GM12878 (cell line): ENCODE measurements at regions of chr14 and their contacts with region 1.

Region 1: DNA sequence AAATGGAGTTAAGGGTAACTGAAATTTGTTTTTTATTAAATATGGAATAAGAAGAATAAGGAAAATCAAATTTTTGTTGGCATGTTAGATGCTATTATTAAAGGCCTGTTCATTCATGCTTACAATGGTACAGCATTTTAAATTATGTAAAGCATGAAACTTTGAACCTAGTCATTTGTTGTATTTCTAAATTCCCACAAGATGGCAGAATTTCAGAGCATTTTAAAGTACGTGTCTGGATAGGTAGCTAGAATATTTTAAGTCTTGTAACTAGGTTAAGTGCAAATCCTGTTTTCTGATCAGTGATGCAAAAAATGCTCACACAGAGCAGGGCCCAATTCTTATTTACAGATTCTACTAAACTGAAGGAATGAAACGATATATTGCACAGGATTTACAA is 585.6 kb upstream of the MIS18BP1 start:
- DNase-seq: peak; percentile 11
- ATAC-seq: peak; percentile 56
- H3K4me3 ChIP-seq: no peak overlapping the region
- H3K27ac ChIP-seq: no peak overlapping the region
- H3K4me1 ChIP-seq: no peaks in the 10 kb centered on the region
- H3K27me3 ChIP-seq: no peaks in the 10 kb centered on the region
- CTCF ChIP-seq: peak in 2 of 3 experiments; percentile 8 to 31; a peak in 1 of 6 replicates
- EP300 ChIP-seq: no peak
- POLR2A ChIP-seq: no peak
- RAD21 ChIP-seq: peak; percentile 68

Region 2: GRCh38 chr14:45426670-45427282 is 411.8 kb before region 1 on chr14:
- CTCF ChIA-PET with region 1: interaction called, 4 read pairs
- POLR2A ChIA-PET with region 1: no interaction called
- RAD21 ChIA-PET with region 1: no interaction called
- SMC1A ChIA-PET with region 1: no interaction called
- in situ Hi-C with region 1: no loop called
- intact Hi-C with region 1: loop called (anchors 10 kb)
- DNase-seq: peak; percentile 4
- ATAC-seq: peak; percentile 77
- H3K4me3 ChIP-seq: no peak overlapping the region
- H3K27ac ChIP-seq: no peak overlapping the region
- H3K4me1 ChIP-seq: no peaks in the 10 kb centered on the region
- H3K27me3 ChIP-seq: no peaks in the 10 kb centered on the region
- CTCF ChIP-seq: peak; percentile 46 to 60 (median 52); a peak in 5 of 6 replicates
- EP300 ChIP-seq: no peak
- POLR2A ChIP-seq: no peak
- RAD21 ChIP-seq: peak; percentile 76

Region 3: DNA sequence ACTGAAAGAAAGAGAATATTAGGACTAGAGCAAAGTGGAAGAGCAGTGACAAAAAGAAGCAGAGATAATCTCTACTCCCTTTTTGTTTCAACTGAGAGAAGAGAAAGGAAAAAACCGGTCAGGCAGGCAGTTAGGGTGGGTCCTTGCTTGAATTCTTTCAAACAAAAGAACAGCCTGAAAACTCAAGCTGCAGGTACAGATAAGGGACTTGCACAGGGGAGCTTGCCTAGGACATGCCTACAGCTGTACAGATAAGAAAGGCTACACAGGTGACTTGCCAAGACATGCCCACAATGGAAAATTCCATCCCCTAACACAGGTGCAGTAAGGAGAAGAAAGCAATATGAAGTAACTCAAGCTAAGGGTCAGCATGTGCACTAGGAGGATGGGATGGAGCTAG is 53.4 kb before region 1 on chr14:
- CTCF ChIA-PET with region 1: no interaction called
- POLR2A ChIA-PET with region 1: no interaction called
- RAD21 ChIA-PET with region 1: no interaction called
- SMC1A ChIA-PET with region 1: no interaction called
- in situ Hi-C with region 1: no loop called
- intact Hi-C with region 1: no loop called
- DNase-seq: no peak
- ATAC-seq: no peak
- H3K4me3 ChIP-seq: no peak overlapping the region
- H3K27ac ChIP-seq: no peak overlapping the region
- H3K4me1 ChIP-seq: no peaks in the 10 kb centered on the region
- H3K27me3 ChIP-seq: no peaks in the 10 kb centered on the region
- CTCF ChIP-seq: no peak
- EP300 ChIP-seq: no peak
- POLR2A ChIP-seq: no peak
- RAD21 ChIP-seq: no peak

Region 4: GRCh38 chr14:45819107-45819506 is 19.5 kb before region 1 on chr14:
- CTCF ChIA-PET with region 1: no interaction called
- POLR2A ChIA-PET with region 1: no interaction called
- RAD21 ChIA-PET with region 1: no interaction called
- SMC1A ChIA-PET with region 1: no interaction called
- in situ Hi-C with region 1: no loop called
- intact Hi-C with region 1: no loop called
- DNase-seq: no peak
- ATAC-seq: no peak
- H3K4me3 ChIP-seq: no peak overlapping the region
- H3K27ac ChIP-seq: no peak overlapping the region
- H3K4me1 ChIP-seq: no peaks in the 10 kb centered on the region
- H3K27me3 ChIP-seq: no peaks in the 10 kb centered on the region
- CTCF ChIP-seq: no peak
- EP300 ChIP-seq: no peak
- POLR2A ChIP-seq: no peak
- RAD21 ChIP-seq: no peak

Region 5: DNA sequence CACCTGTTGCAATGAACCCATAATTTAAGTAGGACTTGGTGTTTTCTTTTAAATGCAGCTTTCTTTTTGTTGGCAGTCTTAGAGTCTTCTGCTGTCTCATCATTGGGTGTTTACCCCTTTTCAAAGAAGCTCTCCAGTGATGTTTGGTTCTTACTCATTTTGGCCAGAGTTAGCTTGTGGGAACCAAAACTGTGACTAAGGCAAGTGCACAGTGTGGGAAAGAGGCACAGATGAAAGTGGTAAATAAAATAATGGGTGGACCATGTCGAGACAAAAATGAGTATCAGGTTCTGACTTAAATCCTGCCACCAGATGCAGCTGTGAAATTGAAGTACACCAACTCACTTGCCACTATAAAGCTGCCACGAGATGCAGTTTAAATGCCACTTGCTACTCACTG is 29.8 kb after region 1 on chr14:
- CTCF ChIA-PET with region 1: interaction called, 5 read pairs
- POLR2A ChIA-PET with region 1: no interaction called
- RAD21 ChIA-PET with region 1: interaction called, 12 read pairs
- SMC1A ChIA-PET with region 1: interaction called, 36 read pairs
- in situ Hi-C with region 1: no loop called
- intact Hi-C with region 1: no loop called
- DNase-seq: peak; percentile 94
- ATAC-seq: peak; percentile 80
- H3K4me3 ChIP-seq: peak overlapping the region; percentile 43; the same call in 1 of the 2 replicates
- H3K27ac ChIP-seq: peak overlapping the region; percentile 93
- H3K4me1 ChIP-seq: peaks cover 16% of the 10 kb centered on the region
- H3K27me3 ChIP-seq: no peaks in the 10 kb centered on the region
- CTCF ChIP-seq: no peak
- EP300 ChIP-seq: no peak
- POLR2A ChIP-seq: no peak
- RAD21 ChIP-seq: 0 out of 2 replicates have a peak, but pooled peaks have one; percentile 3

Region 6: DNA sequence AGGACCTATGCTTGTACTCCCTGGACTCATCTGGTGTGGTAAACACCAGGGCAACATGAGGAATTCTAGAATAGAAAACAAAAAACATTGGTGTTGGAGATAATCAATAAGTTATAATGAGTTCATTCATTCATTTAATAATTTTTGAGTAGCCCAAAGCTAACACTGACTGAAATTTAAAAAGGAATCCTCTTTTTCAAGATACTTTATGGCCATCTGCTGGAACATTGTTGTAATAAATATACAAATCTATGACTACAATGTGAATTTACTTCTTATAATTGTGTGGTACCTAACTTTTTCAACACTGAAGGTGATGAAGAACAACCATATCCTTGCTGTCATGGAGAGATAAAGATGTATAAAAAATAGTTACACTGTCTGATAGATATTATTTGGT is 101.7 kb after region 1 on chr14:
- CTCF ChIA-PET with region 1: interaction called, 5 read pairs
- POLR2A ChIA-PET with region 1: no interaction called
- RAD21 ChIA-PET with region 1: interaction called, 3 read pairs
- SMC1A ChIA-PET with region 1: no interaction called
- in situ Hi-C with region 1: no loop called
- intact Hi-C with region 1: loop called (anchors 5 kb)
- DNase-seq: no peak
- ATAC-seq: no peak
- H3K4me3 ChIP-seq: no peak overlapping the region
- H3K27ac ChIP-seq: no peak overlapping the region
- H3K4me1 ChIP-seq: no peaks in the 10 kb centered on the region
- H3K27me3 ChIP-seq: no peaks in the 10 kb centered on the region
- CTCF ChIP-seq: no peak; a peak in 1 of 6 replicates
- EP300 ChIP-seq: no peak
- POLR2A ChIP-seq: no peak
- RAD21 ChIP-seq: 0 out of 2 replicates have a peak, but pooled peaks have one; percentile 7

Region 7: DNA sequence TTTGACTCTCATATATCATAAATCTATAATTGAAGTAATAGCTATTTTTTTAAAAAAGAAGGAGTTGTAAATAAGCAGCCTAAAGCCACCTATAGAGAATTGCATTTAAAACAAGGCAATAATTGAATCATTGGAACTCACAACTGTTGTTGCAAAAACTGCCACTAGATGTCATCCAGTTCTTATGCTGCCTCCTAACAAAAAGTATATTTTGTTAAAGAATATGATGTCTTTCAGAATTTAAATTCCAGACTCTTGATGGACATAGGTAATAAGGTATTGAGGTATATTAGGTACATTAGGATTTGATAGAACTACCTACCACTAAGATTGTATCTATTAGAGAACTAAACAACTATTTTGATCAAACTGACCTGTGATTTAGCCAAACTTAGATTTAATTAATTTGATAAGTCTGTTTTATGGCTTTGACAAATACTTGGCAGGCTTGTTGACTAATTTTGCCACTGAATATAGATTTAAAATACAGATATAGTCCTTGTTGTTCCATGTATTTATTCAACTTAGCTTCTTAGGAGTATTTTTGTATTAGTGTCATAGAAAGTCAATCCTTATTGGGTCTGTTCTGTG is 411.6 kb after region 1 on chr14:
- CTCF ChIA-PET with region 1: interaction called, 10 read pairs
- POLR2A ChIA-PET with region 1: no interaction called
- RAD21 ChIA-PET with region 1: interaction called, 3 read pairs
- SMC1A ChIA-PET with region 1: interaction called, 6 read pairs
- in situ Hi-C with region 1: no loop called
- intact Hi-C with region 1: no loop called
- DNase-seq: no peak
- ATAC-seq: peak; percentile 40; the same call in 1 of the 3 replicates
- H3K4me3 ChIP-seq: no peak overlapping the region
- H3K27ac ChIP-seq: no peak overlapping the region
- H3K4me1 ChIP-seq: no peaks in the 10 kb centered on the region
- H3K27me3 ChIP-seq: no peaks in the 10 kb centered on the region
- CTCF ChIP-seq: peak; percentile 52 to 60 (median 57); a peak in 5 of 6 replicates
- EP300 ChIP-seq: no peak
- POLR2A ChIP-seq: no peak
- RAD21 ChIP-seq: peak; percentile 60

Region 8: DNA sequence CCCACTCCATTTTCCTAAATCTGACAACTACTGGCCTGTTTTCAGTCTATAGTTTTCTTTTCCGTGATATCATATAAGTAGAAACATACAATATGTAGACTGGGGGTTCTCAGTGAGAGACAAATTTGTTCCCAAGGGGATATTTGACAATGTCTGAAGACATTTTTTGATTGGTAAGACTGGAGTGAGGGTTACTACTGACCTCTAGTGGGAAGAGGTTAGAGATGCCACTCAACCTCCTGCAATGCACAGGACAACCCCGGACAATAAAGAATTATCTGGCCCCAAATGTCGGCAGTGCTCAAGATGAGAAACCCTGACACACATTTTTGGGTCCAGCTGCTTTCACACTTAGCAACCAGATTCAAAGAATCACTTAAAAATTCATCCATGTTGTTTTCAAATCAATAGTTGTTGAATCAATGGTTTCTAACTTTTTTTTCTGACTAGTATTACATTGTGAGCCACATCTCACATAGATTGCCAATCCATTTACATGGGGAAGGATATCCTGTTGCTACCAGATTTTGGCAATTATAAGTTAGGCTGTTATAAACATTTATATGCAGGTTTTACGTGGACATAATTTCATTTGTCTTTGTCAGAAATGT is 505.8 kb after region 1 on chr14:
- CTCF ChIA-PET with region 1: interaction called, 3 read pairs
- POLR2A ChIA-PET with region 1: no interaction called
- RAD21 ChIA-PET with region 1: no interaction called
- SMC1A ChIA-PET with region 1: interaction called, 3 read pairs
- in situ Hi-C with region 1: no loop called
- intact Hi-C with region 1: loop called (anchors 1 kb)
- DNase-seq: peak; percentile 2
- ATAC-seq: peak; percentile 95
- H3K4me3 ChIP-seq: no peak overlapping the region
- H3K27ac ChIP-seq: no peak overlapping the region
- H3K4me1 ChIP-seq: no peaks in the 10 kb centered on the region
- H3K27me3 ChIP-seq: no peaks in the 10 kb centered on the region
- CTCF ChIP-seq: peak; percentile 48 to 62 (median 61)
- EP300 ChIP-seq: no peak
- POLR2A ChIP-seq: no peak
- RAD21 ChIP-seq: peak; percentile 78